ENCODE measurements at regions of chr6 and their contacts with region 1.

Region 1: DNA sequence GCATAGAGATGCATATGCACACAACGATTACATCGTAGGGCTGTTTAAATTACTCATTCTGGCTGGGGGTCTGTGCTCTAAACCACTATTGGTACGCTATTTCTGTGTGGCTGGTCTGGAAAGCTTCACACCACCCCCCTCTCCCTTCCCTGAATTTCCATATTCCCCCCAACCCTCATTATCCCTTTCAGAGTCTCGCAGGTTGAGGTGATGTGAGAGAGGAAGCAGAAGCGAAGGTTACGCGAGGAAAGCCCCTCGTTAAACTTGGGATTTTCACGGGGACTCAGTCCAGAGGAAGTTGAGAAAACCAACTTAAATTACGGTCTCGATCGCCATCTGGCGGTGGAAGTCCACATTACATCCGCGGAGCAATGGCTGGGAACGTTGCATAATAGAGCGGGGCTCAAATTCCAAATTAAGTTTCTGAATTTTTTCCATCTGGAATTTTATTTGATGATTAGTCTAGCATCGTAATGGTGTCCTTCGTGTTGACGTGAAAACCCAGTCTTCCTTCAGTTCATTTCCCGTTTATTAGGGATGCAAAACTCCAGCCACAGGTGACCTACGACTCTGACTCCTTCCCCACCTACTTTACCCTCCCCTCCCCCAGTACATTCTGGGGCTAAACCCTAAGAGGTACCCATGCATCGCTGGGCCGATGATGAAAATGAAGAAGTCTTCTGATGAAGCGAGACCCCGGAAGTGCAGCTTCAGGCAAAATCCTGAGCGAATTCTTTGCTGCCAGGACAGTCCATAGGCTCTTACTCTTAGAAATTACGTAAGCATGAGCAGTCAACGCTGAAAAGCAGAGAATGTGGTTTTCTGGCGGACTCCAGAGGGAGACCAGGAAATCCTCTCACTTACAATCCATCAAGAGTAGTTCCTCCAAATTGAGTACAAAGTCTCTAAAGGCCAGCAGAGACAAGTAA is 19.7 kb downstream of the HLA-DOB start:
- DNase-seq: peak; percentile 38 to 79 (median 62)
- ATAC-seq: peak; percentile 80
- H3K4me3 ChIP-seq: no peak overlapping the region
- H3K4me3 Mint-ChIP-seq: peak overlapping the region in 9 of 10 donors; percentile 35 to 80 (median 68)
- H3K27ac ChIP-seq: no peak overlapping the region
- H3K27ac Mint-ChIP-seq: peak overlapping the region in 1 of 9 donors; percentile 23
- H3K4me1 ChIP-seq: peaks cover 5 to 16% of the 10 kb centered on the region in 2 donors
- H3K4me1 Mint-ChIP-seq: peaks cover 15 to 35% (median 27%) of the 10 kb centered on the region in 7 donors
- H3K27me3 ChIP-seq: peaks cover 0 to 5% of the 10 kb centered on the region in 2 donors
- H3K27me3 Mint-ChIP-seq: peaks cover 0 to 70% (median 29%) of the 10 kb centered on the region in 5 donors

Region 2: GRCh38 chr6:32108094-32108627 is 689.0 kb before region 1 on chr6:
- CTCF ChIA-PET with region 1: no interaction called
- POLR2A ChIA-PET with region 1: no interaction called
- intact Hi-C with region 1: no loop called
- DNase-seq: no peak
- ATAC-seq: peak; percentile 20
- H3K4me3 ChIP-seq: no peak overlapping the region
- H3K4me3 Mint-ChIP-seq: peak overlapping the region in 5 of 10 donors; percentile 24 to 74 (median 69)
- H3K27ac ChIP-seq: no peak overlapping the region
- H3K27ac Mint-ChIP-seq: peak overlapping the region in 5 of 9 donors; percentile 32 to 91 (median 63)
- H3K4me1 ChIP-seq: peaks cover 0 to 9% of the 10 kb centered on the region in 2 donors
- H3K4me1 Mint-ChIP-seq: peaks cover 2 to 35% (median 28%) of the 10 kb centered on the region in 7 donors
- H3K27me3 ChIP-seq: no peaks in the 10 kb centered on the region
- H3K27me3 Mint-ChIP-seq: peaks cover 0 to 39% (median 6%) of the 10 kb centered on the region in 5 donors

Region 3: GRCh38 chr6:32700391-32701040 is 96.6 kb before region 1 on chr6:
- CTCF ChIA-PET with region 1: no interaction called
- POLR2A ChIA-PET with region 1: no interaction called
- intact Hi-C with region 1: loop called (anchors 1 to 2 kb)
- DNase-seq: peak in 6 of 9 donors; percentile 15 to 54 (median 38)
- ATAC-seq: peak; percentile 68
- H3K4me3 ChIP-seq: no peak overlapping the region
- H3K4me3 Mint-ChIP-seq: peak overlapping the region in 7 of 10 donors; percentile 25 to 61 (median 46)
- H3K27ac ChIP-seq: no peak overlapping the region
- H3K27ac Mint-ChIP-seq: no peak overlapping the region
- H3K4me1 ChIP-seq: no peaks in the 10 kb centered on the region
- H3K4me1 Mint-ChIP-seq: peaks cover 0 to 9% (median 5%) of the 10 kb centered on the region in 7 donors
- H3K27me3 ChIP-seq: no peaks in the 10 kb centered on the region
- H3K27me3 Mint-ChIP-seq: peaks cover 26 to 69% (median 43%) of the 10 kb centered on the region in 5 donors

Region 4: DNA sequence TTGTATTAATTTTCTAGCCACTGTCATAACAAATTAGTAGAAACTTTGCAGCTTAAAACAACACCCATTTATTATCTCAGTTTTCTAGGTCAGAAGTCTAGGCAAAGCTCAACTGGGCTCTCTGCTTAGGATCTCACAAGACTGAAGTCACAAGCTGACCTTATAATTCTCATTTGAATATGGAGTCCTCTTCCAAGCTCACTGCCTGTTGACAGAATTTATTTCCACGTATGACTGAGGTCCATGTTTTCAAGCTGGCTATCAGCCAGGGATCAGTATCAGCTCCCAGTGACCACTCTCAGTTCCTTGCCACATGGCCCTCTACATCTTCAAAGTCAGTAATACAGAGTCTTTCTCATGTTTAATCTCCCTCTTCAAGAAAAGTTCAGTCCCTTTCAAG is 22.0 kb before region 1 on chr6:
- CTCF ChIA-PET with region 1: no interaction called
- POLR2A ChIA-PET with region 1: no interaction called
- intact Hi-C with region 1: no loop called
- DNase-seq: no peak
- ATAC-seq: no peak
- H3K4me3 ChIP-seq: no peak overlapping the region
- H3K4me3 Mint-ChIP-seq: no peak overlapping the region
- H3K27ac ChIP-seq: no peak overlapping the region
- H3K27ac Mint-ChIP-seq: no peak overlapping the region
- H3K4me1 ChIP-seq: no peaks in the 10 kb centered on the region
- H3K4me1 Mint-ChIP-seq: no peaks in the 10 kb centered on the region
- H3K27me3 ChIP-seq: peaks cover 0 to 1% of the 10 kb centered on the region in 2 donors
- H3K27me3 Mint-ChIP-seq: peaks cover 22 to 69% (median 27%) of the 10 kb centered on the region in 5 donors

Region 5: GRCh38 chr6:32785781-32786533 is 11.2 kb before region 1 on chr6:
- CTCF ChIA-PET with region 1: interaction called, 12 read pairs
- POLR2A ChIA-PET with region 1: no interaction called
- intact Hi-C with region 1: no loop called
- DNase-seq: peak in 6 of 9 donors; percentile 28 to 54 (median 36)
- ATAC-seq: peak; percentile 76
- H3K4me3 ChIP-seq: no peak overlapping the region
- H3K4me3 Mint-ChIP-seq: no peak overlapping the region
- H3K27ac ChIP-seq: no peak overlapping the region
- H3K27ac Mint-ChIP-seq: no peak overlapping the region
- H3K4me1 ChIP-seq: no peaks in the 10 kb centered on the region
- H3K4me1 Mint-ChIP-seq: peaks cover 0 to 2% (median 0%) of the 10 kb centered on the region in 7 donors
- H3K27me3 ChIP-seq: no peaks in the 10 kb centered on the region
- H3K27me3 Mint-ChIP-seq: peaks cover 13 to 68% (median 21%) of the 10 kb centered on the region in 5 donors